K562 (cell line): ENCODE measurements at regions of chr19 and their contacts with region 1.

Region 1: GRCh38 chr19:8505680-8506401 is 3.4 kb upstream of the PRAM1 start:
- DNase-seq: peak; percentile 84 to 88 (median 84)
- ATAC-seq: peak; percentile 90
- H3K4me3 ChIP-seq: peak overlapping the region; percentile 40
- H3K27ac ChIP-seq: peak overlapping the region; percentile 35; the same call in 1 of the 3 replicates
- H3K4me1 ChIP-seq: peaks cover 12 to 52% of the 10 kb centered on the region in 2 experiments; a peak in 4 of 5 replicates
- H3K27me3 ChIP-seq: no peaks in the 10 kb centered on the region
- CTCF ChIP-seq: peak; percentile 70 to 87 (median 76)
- EP300 ChIP-seq: no peak
- POLR2A ChIP-seq: peak; percentile 68
- RAD21 ChIP-seq: peak; percentile 70 to 79

Region 2: DNA sequence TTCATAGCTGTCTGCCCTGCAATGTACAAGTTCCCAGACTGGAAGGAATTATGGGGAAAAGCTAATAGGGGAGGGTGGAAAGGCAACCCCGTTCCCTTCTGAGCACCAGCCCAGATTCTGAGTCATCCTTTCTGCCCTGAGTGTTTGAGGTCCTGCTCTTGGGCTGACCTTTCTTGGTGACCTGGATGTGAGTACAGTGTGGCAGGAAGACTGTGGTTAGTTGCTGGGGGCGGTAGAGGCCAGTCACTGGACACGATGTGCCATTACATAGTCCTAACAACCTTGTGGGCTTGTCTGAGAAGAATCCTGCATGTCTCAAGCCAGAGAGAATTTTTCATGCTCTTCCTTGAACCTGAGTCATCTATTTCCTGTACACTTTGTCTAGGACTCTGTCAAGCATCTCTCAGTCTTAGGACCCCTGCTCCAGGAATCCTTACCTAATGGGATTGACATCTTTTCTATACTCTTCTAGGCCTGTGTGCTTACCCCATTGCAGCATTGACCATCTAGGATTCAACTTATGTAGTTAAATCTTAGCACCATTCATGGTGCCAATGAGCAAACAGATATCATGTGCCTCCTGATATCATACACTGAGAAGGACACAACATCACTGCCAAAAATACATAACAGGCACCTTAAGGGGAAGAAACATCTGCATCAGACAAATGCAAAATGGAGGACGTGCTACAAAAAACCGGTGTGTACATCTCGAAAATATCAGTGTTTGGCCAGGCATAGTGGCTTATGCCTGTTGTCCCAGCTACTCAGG is 150.0 kb before region 1 on chr19:
- CTCF ChIA-PET with region 1: interaction called, 3 read pairs
- POLR2A ChIA-PET with region 1: no interaction called
- in situ Hi-C with region 1: no loop called
- intact Hi-C with region 1: loop called (anchors 5 kb)
- DNase-seq: peak; percentile 37 to 86 (median 57)
- ATAC-seq: peak; percentile 87
- H3K4me3 ChIP-seq: no peak overlapping the region
- H3K27ac ChIP-seq: peak overlapping the region; percentile 30; the same call in 2 of the 3 replicates
- H3K4me1 ChIP-seq: peaks cover 9 to 18% of the 10 kb centered on the region in 2 experiments; a peak in 4 of 5 replicates
- H3K27me3 ChIP-seq: peaks cover 2 to 7% of the 10 kb centered on the region in 2 experiments; a peak in 3 of 5 replicates
- CTCF ChIP-seq: peak; percentile 22 to 37 (median 27); a peak in 4 of 6 replicates
- EP300 ChIP-seq: 0 out of 2 replicates have a peak, but pooled peaks have one; percentile 14
- POLR2A ChIP-seq: no peak
- RAD21 ChIP-seq: peak in 1 of 2 experiments; percentile 57; a peak in 2 of 4 replicates

Region 3: GRCh38 chr19:8494158-8494557 is 11.7 kb before region 1 on chr19:
- CTCF ChIA-PET with region 1: no interaction called
- POLR2A ChIA-PET with region 1: interaction called, 10 read pairs
- in situ Hi-C with region 1: no loop called
- intact Hi-C with region 1: no loop called
- DNase-seq: no peak
- ATAC-seq: no peak
- H3K4me3 ChIP-seq: no peak overlapping the region
- H3K27ac ChIP-seq: no peak overlapping the region
- H3K4me1 ChIP-seq: peaks cover 0 to 25% of the 10 kb centered on the region in 2 experiments; a peak in 2 of 5 replicates
- H3K27me3 ChIP-seq: peaks cover 2 to 25% of the 10 kb centered on the region in 2 experiments; a peak in 4 of 5 replicates
- CTCF ChIP-seq: no peak
- EP300 ChIP-seq: no peak
- POLR2A ChIP-seq: no peak
- RAD21 ChIP-seq: no peak

Region 4: DNA sequence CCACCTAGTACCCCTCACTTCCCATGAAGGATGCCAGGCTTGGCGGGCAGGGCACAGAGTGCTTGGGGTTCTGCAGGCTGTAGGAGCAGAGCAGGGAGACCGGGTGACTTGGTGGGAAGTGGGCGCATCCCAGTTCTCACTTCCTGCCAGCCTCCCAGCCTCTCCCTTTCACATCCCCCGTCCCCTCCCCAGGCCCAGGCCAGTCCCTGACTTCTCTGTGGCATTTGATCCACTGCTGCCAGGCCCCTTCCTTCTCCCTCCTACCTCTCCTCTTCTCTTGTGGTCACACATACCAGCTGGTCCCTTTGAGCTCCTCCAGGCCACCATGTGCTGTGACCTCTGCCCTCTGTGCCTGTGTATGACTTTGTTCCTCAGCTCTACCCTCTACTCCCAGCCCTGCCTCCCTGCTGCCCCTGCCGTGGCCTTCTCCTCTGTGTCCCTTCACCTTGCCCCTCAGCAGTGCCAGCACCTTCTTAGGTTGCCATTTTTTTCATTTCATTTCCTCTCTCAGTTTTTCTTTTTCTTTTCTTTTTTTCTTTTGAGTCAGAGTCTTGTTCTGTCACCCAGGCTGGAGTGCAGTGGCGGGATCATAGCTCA is 51.9 kb after region 1 on chr19:
- CTCF ChIA-PET with region 1: no interaction called
- POLR2A ChIA-PET with region 1: no interaction called
- in situ Hi-C with region 1: no loop called
- intact Hi-C with region 1: no loop called
- DNase-seq: no peak
- ATAC-seq: no peak; the same call in 2 of the 3 replicates
- H3K4me3 ChIP-seq: no peak overlapping the region
- H3K27ac ChIP-seq: no peak overlapping the region
- H3K4me1 ChIP-seq: peaks cover 0 to 8% of the 10 kb centered on the region in 2 experiments; a peak in 2 of 5 replicates
- H3K27me3 ChIP-seq: peaks cover 2 to 8% of the 10 kb centered on the region in 2 experiments; a peak in 2 of 5 replicates
- CTCF ChIP-seq: no peak
- EP300 ChIP-seq: no peak
- POLR2A ChIP-seq: no peak
- RAD21 ChIP-seq: no peak